Left cardiac atrium (tissue), 4 donors: ENCODE measurements at regions of chr3 and their contacts with region 1.

Region 1: GRCh38 chr3:115169808-115170207 is 22.7 kb upstream of the ZBTB20 start:
- DNase-seq: no peak
- ATAC-seq: no peak

Region 2: GRCh38 chr3:114839476-114839875 is 330.3 kb before region 1 on chr3:
- intact Hi-C with region 1: loop called in 1 of 2 experiments (anchors 10 kb)
- DNase-seq: no peak
- ATAC-seq: no peak

Region 3: GRCh38 chr3:114928989-114929640 is 240.7 kb before region 1 on chr3:
- intact Hi-C with region 1: no loop called
- DNase-seq: no peak
- ATAC-seq: no peak

Region 4: DNA sequence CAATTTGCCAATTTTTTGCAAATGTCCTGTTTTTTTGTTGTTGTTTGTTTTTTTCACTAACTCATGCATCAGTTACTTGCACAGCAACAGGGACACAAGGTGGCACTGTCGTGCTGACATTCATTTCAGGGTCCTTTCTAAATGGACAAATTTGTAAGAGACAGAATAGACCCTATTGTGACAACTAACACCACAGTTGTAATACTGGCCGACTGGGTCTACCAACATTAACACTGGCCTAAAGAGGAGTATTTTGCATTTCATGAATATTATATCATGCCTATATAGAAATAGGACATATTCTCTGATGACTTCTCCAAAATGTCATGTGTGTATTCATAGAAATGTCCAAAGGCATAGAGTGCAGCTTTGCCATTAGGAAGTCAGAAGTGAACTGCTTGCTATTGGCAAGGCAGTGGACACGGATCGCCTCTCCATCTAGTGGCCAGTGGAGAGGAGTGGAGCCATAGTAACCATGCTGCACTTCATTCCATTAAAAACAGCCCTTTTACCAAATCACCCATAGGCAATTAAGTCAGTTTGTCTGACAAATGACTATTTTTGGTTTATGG is 77.5 kb before region 1 on chr3:
- intact Hi-C with region 1: loop called in 1 of 2 experiments (anchors 5 kb)
- DNase-seq: peak; percentile 61
- ATAC-seq: peak; percentile 97 to 99

Region 5: DNA sequence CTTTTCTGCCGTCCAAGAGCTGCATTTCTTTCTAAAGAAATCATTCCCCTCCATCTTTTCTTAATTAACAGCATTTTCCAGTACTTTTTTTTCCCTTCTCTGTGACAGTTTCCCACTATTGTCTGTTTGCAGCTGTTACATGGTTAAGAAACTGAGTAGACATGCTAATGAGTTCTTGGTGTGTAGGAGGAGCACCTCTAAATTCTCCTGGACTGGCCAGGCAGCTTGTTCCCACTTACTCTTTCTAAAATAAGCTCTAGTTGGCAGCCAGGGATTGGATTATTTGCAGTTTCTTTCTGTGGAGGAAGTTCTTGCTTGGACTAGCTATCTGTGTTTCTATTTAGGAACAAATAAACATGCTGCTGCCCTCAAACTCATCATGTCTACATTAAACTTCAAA is 218.4 kb after region 1 on chr3:
- intact Hi-C with region 1: no loop called
- DNase-seq: no peak
- ATAC-seq: peak; percentile 77 to 88